ENCODE measurements at regions of chr7 and their contacts with region 1.

Region 1: DNA sequence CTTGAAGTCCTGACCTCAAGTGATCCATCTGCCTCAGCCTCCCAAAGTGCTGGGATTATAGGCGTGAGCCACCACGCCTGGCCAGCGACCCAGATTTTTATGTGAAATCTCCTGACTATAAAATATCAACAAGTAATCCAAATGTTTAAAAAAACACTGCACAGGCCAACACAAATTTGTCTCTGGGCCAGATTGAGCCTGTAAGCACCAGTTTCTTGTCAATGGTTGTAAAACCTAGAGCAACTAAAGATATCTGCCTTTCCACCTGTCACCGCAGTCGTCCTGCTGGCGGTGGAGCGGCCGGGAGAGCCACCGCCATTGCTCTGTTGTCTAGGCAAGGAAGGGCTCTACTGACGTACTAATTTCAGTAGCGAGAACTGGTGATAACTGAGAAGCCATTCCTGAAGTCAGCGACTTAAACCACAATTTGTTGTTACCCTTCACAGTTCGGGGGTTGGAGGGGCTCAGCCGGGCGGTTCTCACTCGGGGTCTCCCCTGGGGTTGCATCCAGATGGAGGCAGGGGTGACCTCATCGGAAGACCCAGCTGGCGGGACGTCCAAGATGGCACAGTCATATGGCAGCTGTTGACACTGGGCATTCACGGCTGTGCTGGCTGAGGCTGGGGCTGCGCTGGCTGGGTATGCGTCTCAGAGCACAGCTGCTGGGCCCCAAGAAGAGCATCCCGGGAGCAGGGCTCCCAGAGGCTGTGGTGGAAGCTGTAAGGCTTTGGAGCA is 55.2 kb upstream of the PDGFA start:
- DNase-seq: no peak
- H3K4me3 ChIP-seq: peak overlapping the region in 1 of 59 donors; percentile 28
- H3K27ac ChIP-seq: peak overlapping the region in 8 of 59 donors; percentile 16 to 77 (median 29)
- H3K27me3 ChIP-seq: no peaks in the 10 kb centered on the region
- CTCF ChIP-seq: no peak

Region 2: GRCh38 chr7:518630-519483 is 56.0 kb before region 1 on chr7:
- intact Hi-C with region 1: no loop called
- DNase-seq: peak; percentile 64 to 92 (median 82)
- H3K4me3 ChIP-seq: peak overlapping the region; percentile 75 to 95 (median 88)
- H3K27ac ChIP-seq: peak overlapping the region; percentile 82 to 99 (median 98)
- H3K27me3 ChIP-seq: peaks cover 0 to 21% (median 0%) of the 10 kb centered on the region in 45 donors
- CTCF ChIP-seq: peak in 15 of 56 donors; percentile 8 to 37 (median 19)

Region 3: DNA sequence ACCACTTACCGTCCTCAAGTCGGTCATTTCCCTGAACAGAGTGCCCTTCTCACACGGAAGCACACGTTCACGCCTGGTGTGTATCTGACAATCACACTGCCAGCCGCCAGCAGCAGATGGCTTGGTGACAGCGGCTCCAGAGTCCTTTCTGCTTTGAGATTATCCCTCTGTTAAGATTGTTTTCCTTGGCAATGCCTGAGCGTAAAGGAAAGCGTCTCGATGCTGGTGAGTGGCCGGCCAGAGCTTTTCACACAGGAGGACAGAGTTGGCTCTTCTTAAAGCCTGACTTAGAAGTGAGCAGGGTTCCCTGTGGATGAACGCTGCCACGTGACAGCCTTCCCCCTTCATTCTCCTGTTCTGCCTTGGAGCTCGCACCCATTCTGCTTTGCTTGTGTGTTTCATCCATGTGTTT is 174.3 kb after region 1 on chr7:
- intact Hi-C with region 1: loop called in 1 of 2 experiments (anchors 10 kb)
- DNase-seq: peak in 5 of 10 donors; percentile 43 to 59 (median 53)
- H3K4me3 ChIP-seq: no peak overlapping the region
- H3K27ac ChIP-seq: peak overlapping the region in 6 of 59 donors; percentile 3 to 65 (median 10)
- H3K27me3 ChIP-seq: no peaks in the 10 kb centered on the region
- CTCF ChIP-seq: no peak

Measured in dorsolateral prefrontal cortex (tissue), 120 donors.